ENCODE measurements at regions of chr13 and their contacts with region 1.

Region 1: GRCh38 chr13:43786773-43787517 is at the start of gene ENOX1:
- DNase-seq: peak; percentile 72 to 87 (median 86)
- ATAC-seq: peak; percentile 87 to 89
- H3K4me3 ChIP-seq: peak within 1 kb of the TSS; percentile 52
- H3K27ac ChIP-seq: peak within 1 kb of the TSS; percentile 56
- H3K4me1 ChIP-seq: no peaks in the 10 kb centered on the region
- H3K27me3 ChIP-seq: no peaks in the 10 kb centered on the region
- total RNA-seq, gene ENOX1: 2.1 to 2.6 (median 2.3) TPM

Region 2: DNA sequence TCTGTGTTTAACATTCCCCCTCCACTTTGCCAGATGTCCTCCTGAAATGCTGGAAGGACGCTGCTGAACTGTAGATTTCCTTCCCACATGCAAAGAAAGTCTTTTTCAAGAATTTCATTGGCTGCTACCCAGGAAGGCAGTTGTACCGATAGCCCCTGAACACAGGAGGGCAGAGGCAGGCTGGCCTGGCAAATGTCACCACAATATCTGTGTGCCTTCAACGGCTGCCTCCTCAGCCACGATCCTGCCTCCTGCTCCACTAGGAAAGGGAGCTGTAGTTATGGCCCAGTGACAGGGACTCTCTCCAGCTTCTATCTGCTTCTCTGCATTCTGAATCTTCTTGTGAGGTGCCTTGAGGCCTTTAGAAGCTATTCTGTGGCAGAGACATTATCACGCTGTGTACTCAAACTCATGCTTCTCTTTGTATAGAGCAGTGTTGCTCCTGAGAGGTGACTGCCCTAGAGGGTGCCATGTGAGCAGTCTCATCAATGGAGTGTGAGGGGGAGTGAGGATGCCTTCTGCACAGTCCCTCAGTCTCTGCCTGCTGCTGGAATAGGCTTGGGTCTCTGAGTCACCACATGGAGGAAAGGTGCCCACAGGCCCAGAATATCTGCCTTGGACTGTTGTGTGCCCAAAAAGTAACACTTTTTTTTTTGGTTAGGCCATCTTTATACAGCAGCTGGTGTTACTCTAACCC is 483.8 kb before region 1 on chr13:
- intact Hi-C with region 1: loop called in 2 of 4 experiments (anchors 10 kb)
- DNase-seq: peak; percentile 55 to 78 (median 77)
- ATAC-seq: peak; percentile 87
- H3K4me3 ChIP-seq: no peak overlapping the region
- H3K27ac ChIP-seq: no peak overlapping the region
- H3K4me1 ChIP-seq: no peaks in the 10 kb centered on the region
- H3K27me3 ChIP-seq: no peaks in the 10 kb centered on the region

Measured in right cardiac atrium (tissue), 5 donors.